Right ventricle myocardium superior (tissue), 1 donor: ENCODE measurements at regions of chr9 and their contacts with region 1.

Region 1: GRCh38 chr9:121545875-121546423 is 46.3 kb upstream of the GGTA1 start:
- DNase-seq: peak; percentile 98
- ATAC-seq: peak; percentile 87

Region 2: DNA sequence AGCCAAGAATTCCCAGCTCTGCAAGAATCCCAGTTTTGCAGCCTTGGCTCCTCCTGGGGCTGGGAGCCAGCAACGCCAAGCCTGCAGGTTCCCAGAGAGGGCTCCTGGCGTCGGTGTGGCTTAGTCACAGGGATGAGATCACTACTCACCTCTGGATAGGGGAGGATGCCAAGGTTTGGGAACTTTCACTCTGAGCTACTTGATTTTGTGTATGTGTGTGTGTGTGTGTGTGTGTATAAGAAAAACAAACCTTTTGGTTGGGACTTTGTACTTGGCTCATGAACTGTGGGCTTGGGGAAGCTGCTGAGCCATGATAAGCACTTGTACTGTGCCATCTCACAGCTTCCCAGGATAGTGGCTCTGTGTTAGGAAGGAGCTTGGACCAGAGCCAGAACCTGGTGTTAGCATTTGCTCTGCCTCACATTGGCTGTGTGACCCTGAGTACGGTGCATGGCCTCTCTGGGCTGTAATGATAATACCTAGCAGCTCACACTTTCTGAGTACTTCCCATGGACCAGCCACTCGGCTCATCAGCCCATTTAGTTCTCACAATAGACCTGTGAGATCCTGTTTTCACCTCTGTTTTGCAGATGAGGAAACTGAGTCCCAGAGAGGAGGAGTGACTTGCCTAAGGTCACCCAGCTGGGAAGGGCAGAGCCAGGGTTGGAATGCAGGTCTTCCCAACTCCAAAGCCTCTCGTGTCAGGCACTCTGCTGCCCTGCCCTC is 64.1 kb after region 1 on chr9:
- intact Hi-C with region 1: loop called (anchors 10 kb)
- DNase-seq: peak; percentile 73
- ATAC-seq: peak; percentile 40

Region 3: DNA sequence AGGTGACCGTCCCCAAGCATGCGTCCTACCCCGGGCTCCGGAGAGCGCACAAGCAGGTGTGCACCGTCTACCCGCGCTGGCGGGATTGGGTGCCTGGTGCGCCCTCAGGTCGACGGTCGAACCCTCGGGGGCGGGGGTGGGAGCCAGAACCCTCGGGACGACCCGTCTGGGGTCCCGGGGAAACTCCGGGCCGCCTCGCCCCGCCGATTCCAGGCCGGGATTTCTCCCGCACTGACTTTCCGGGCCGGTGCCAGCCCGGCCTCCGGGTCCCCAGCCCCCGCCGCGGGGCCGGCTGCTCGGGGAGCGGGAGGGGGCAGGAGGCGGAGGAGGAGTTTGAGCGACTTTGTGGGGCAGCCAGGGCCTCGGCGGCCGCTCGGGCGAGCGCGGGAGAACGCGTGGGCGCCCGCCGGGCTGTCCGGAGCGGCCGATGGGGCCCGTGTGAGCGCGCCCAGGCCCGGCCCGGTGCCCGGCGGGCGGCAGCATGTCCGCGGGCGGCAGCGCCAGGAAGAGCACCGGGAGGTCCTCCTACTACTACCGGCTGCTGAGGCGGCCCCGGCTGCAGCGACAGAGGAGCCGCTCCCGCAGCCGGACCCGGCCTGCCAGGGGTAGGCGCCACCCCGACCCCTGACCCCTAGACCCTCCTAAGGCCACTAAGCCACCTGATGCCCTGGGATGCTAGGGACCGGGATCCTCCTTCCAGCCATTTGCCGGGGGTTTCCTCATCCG is 105.5 kb after region 1 on chr9 and contains the start of gene DAB2IP:
- intact Hi-C with region 1: no loop called
- DNase-seq: peak; percentile 77
- ATAC-seq: peak; percentile 74
- total RNA-seq, gene DAB2IP: 44.7 TPM

Region 4: GRCh38 chr9:121698627-121699570 is 152.9 kb after region 1 on chr9:
- intact Hi-C with region 1: loop called (anchors 10 kb)
- DNase-seq: peak; percentile 84
- ATAC-seq: peak; percentile 21